Thyroid gland (tissue), 4 donors: ENCODE measurements at regions of chr6 and their contacts with region 1.

Region 1: GRCh38 chr6:157034436-157035230 is 257.5 kb downstream of the ARID1B start:
- DNase-seq: no peak
- H3K4me3 ChIP-seq: no peak overlapping the region
- H3K27ac ChIP-seq: no peak overlapping the region
- H3K4me1 ChIP-seq: peaks cover 23 to 34% of the 10 kb centered on the region in 2 donors
- H3K27me3 ChIP-seq: no peaks in the 10 kb centered on the region
- CTCF ChIP-seq: peak; percentile 34 to 74 (median 63)
- POLR2A ChIP-seq: no peak

Region 2: GRCh38 chr6:157148391-157149323 is 114.0 kb after region 1 on chr6:
- intact Hi-C with region 1: no loop called
- DNase-seq: peak in 1 of 2 donors; percentile 23
- H3K4me3 ChIP-seq: no peak overlapping the region
- H3K27ac ChIP-seq: peak overlapping the region in 2 of 3 donors; percentile 42 to 57
- H3K4me1 ChIP-seq: peaks cover 3 to 5% of the 10 kb centered on the region in 2 donors
- H3K27me3 ChIP-seq: no peaks in the 10 kb centered on the region
- CTCF ChIP-seq: no peak
- POLR2A ChIP-seq: no peak

Region 3: GRCh38 chr6:157184202-157185020 is 149.8 kb after region 1 on chr6:
- intact Hi-C with region 1: loop called (anchors 10 kb)
- DNase-seq: peak; percentile 96 to 97
- H3K4me3 ChIP-seq: no peak overlapping the region
- H3K27ac ChIP-seq: peak overlapping the region in 1 of 3 donors; percentile 20
- H3K4me1 ChIP-seq: peaks cover 32 to 33% of the 10 kb centered on the region in 2 donors
- H3K27me3 ChIP-seq: no peaks in the 10 kb centered on the region
- CTCF ChIP-seq: peak; percentile 62 to 98 (median 96)
- POLR2A ChIP-seq: peak in 1 of 2 donors; percentile 25

Region 4: GRCh38 chr6:157198419-157199279 is 164.0 kb after region 1 on chr6:
- intact Hi-C with region 1: no loop called
- DNase-seq: peak; percentile 49 to 60
- H3K4me3 ChIP-seq: no peak overlapping the region
- H3K27ac ChIP-seq: no peak overlapping the region
- H3K4me1 ChIP-seq: peaks cover 0 to 7% of the 10 kb centered on the region in 2 donors
- H3K27me3 ChIP-seq: no peaks in the 10 kb centered on the region
- CTCF ChIP-seq: no peak
- POLR2A ChIP-seq: no peak